ENCODE measurements at regions of chr1 and their contacts with region 1.

Region 1: GRCh38 chr1:119935373-119935772 is 39.1 kb upstream of the ADAM30 start:
- DNase-seq: no peak
- ATAC-seq: no peak
- H3K4me3 Mint-ChIP-seq: no peak overlapping the region
- H3K27ac Mint-ChIP-seq: no peak overlapping the region
- H3K4me1 Mint-ChIP-seq: no peaks in the 10 kb centered on the region
- H3K27me3 Mint-ChIP-seq: no peaks in the 10 kb centered on the region
- CTCF ChIP-seq: no peak

Region 2: GRCh38 chr1:119895986-119896702 is 39.2 kb before region 1 on chr1 and contains the start of gene ADAM30:
- CTCF ChIA-PET with region 1: no interaction called
- POLR2A ChIA-PET with region 1: no interaction called
- intact Hi-C with region 1: no loop called
- DNase-seq: no peak
- ATAC-seq: no peak
- H3K4me3 Mint-ChIP-seq: no peak within 1 kb of the TSS
- H3K27ac Mint-ChIP-seq: no peak within 1 kb of the TSS
- H3K4me1 Mint-ChIP-seq: peaks cover 12% of the 10 kb centered on the region
- H3K27me3 Mint-ChIP-seq: peaks cover 19% of the 10 kb centered on the region
- CTCF ChIP-seq: no peak
- total RNA-seq, gene ADAM30: not detected

Region 3: DNA sequence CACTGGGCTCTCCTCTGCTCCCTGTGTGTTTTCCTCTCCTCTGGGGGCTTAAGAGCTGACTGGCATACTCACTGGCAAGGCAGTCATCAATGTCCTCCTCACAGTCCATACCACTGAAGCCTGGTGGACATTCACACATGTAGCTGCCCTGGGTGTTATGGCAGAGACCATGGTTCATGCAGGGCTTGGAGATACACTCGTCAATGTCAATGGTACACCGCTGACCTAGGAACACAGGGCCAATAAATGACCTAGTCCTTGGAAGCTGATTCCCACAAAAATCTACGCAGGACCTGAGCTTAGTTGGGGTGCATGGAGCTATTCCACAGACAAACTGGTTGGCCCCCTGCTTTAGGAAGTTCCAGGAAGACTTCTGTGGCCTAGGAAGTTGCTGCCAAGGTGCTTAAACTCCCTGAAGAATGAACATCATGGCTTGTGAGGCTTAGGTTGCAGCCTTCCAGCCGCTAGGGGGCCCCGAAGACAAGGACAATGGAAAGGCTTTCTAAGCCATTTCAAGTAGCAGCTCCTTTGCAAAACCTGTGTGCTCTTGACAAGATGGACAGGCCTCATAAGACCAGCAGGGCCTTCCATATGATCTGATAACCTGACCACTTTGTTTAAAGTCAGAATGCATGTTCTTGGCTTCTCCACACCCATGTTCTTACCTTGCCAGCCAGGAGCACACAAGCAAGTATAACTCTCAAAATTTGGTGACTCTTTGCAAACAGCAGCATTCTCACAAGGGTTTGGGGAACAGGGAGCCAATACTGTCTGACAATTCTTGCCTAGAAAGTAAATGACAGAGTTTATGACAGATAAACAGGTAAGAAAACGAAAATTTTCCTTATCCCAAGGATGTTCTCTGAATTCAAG is 13.2 kb after region 1 on chr1:
- CTCF ChIA-PET with region 1: interaction called, 14 read pairs
- POLR2A ChIA-PET with region 1: interaction called, 3 read pairs
- intact Hi-C with region 1: no loop called
- DNase-seq: peak; percentile 89
- ATAC-seq: peak; percentile 72
- H3K4me3 Mint-ChIP-seq: no peak overlapping the region
- H3K27ac Mint-ChIP-seq: no peak overlapping the region
- H3K4me1 Mint-ChIP-seq: no peaks in the 10 kb centered on the region
- H3K27me3 Mint-ChIP-seq: no peaks in the 10 kb centered on the region
- CTCF ChIP-seq: peak; percentile 68